Activated CD4-positive, alpha-beta memory T cell treated with anti-CD3 and anti-CD28 coated beads, Interleukin-2, amount 10 ng/mL, durations not matched to agents 7 days and 5 days (primary cell): ENCODE measurements at regions of chr7 and their contacts with region 1.

Region 1: DNA sequence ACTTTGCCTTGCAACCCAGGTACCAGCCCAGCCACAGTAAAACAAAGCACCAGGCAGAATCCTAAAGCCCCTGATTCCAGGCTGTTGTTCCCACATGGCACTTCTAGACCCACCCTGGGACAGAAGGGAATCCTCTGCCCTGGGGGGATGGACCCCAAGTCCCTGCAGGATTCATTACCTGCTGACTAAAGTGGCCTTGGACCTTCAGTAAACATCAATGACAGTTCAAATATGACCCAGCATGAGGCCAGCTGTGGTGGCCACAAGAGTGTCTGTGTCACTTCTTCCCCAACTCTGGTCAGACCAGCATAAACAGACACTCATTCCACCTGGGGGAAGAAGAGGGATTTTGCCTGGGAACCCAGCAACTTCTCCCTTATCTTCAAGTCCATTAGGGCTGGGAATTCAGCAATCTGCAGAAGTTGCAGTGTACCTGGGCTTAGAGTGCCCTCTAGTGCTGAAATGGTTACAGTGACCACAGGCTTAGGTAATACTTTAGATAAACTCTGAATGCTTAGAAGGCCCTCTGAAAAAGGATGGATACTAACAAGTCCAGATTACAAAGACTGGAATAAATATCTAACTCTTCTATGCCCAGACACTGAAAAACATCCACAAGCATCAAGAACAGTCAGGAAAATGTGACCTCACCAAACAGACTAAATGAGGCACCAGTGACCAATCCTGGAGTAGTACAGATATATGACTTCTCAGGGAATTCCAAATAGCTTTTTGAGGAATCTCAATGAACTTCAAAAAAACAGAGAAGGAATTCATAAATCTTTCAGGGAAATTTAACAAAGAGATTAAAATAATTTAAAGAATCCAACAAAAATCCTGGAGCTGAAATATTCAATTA is 108.5 kb upstream of the TMEM168 start:
- DNase-seq: peak; percentile 42
- H3K4me3 Mint-ChIP-seq: no peak overlapping the region
- H3K27ac Mint-ChIP-seq: no peak overlapping the region
- H3K4me1 Mint-ChIP-seq: no peaks in the 10 kb centered on the region
- H3K27me3 Mint-ChIP-seq: no peaks in the 10 kb centered on the region

Region 2: DNA sequence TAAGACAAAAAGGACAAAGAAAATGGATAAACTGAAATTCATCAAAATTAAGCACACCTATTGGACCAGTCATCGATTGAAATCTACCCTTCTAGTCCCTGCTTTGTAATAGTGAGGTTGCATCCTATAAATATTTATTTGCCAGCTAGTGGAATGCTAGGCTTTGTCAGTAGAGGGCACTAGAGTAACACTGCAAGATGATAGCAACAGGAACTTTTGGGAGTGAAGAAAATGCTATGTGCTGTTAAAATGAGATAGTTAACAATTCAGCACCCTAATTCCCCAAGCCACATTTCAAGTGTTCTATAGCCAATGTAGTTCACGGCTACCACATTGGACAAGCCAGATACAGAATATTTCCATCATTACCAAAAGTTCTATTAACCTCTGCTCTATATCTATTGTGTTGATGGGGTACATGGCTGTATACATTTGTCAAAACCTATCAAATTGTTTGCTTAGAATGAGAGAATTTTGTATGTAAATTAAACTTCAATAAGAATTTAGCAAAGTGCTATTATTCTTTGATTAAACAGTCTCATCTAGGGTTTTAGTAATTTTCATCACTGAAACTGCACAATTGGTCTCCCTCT is 348.1 kb before region 1 on chr7:
- CTCF ChIA-PET with region 1: interaction called, 20 read pairs
- POLR2A ChIA-PET with region 1: no interaction called
- DNase-seq: no peak
- H3K4me3 Mint-ChIP-seq: no peak overlapping the region
- H3K27ac Mint-ChIP-seq: no peak overlapping the region
- H3K4me1 Mint-ChIP-seq: no peaks in the 10 kb centered on the region
- H3K27me3 Mint-ChIP-seq: peaks cover 13% of the 10 kb centered on the region

Region 3: DNA sequence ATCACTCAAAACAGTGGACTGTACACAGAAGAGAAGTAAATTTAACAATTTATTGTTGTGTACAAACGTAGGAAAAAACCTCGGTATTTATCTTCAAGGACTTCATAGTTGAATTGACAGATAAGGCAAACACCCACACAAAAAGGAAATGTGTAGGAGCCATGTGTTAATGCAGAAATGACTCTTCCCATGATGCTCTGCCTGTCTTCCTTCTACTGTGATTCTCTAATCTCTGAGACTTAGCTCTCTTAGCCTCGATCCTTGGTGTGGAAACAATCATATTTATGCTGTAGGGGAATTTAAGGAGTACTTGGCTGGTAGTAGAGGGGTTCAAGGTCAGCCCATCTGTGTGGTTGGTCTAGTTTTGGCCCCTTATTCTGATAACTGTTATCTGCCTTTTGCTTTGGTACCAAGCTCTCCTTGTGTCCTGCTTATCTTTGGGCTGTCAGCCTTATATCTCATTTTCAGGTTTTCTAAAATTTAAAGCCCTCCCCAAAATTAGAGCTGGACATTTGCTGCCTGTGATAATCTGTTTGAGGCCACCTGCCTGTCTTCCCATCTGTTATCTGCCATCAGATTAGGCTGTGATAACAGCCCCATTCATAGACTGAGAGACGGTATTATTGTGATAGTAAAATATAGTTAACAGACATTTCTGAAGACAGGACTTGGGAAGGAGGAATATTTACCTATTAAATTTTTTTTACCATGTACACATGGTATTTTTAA is 106.2 kb after region 1 on chr7:
- CTCF ChIA-PET with region 1: no interaction called
- POLR2A ChIA-PET with region 1: no interaction called
- DNase-seq: no peak
- H3K4me3 Mint-ChIP-seq: no peak overlapping the region
- H3K27ac Mint-ChIP-seq: no peak overlapping the region
- H3K4me1 Mint-ChIP-seq: no peaks in the 10 kb centered on the region
- H3K27me3 Mint-ChIP-seq: no peaks in the 10 kb centered on the region